H1 (cell line): ENCODE measurements at regions of chr1 and their contacts with region 1.

Region 1: GRCh38 chr1:220786337-220787068 is at the start of gene MTARC1:
- DNase-seq: peak in 1 of 2 experiments; percentile 81
- H3K4me3 ChIP-seq: peak within 1 kb of the TSS; percentile 59 to 84 (median 69)
- H3K27ac ChIP-seq: peak within 1 kb of the TSS; percentile 63; the same call in 1 of the 2 replicates
- H3K4me1 ChIP-seq: peaks cover 4 to 14% (median 11%) of the 10 kb centered on the region in 4 experiments
- H3K27me3 ChIP-seq: no peaks in the 10 kb centered on the region
- CTCF ChIP-seq: peak in 2 of 3 experiments; percentile 12 to 27; a peak in 2 of 4 replicates
- EP300 ChIP-seq: no peak
- POLR2A ChIP-seq: peak in 1 of 2 experiments; percentile 59; a peak in 2 of 3 replicates
- RAD21 ChIP-seq: peak; percentile 5 to 7; a peak in 1 of 4 replicates
- total RNA-seq, gene MTARC1: 42.4 and 46.2 TPM in 2 replicates

Region 2: GRCh38 chr1:220748089-220748934 is 38.2 kb before region 1 on chr1 and contains the start of gene MTARC2:
- CTCF ChIA-PET with region 1: interaction called, 42 read pairs
- POLR2A ChIA-PET with region 1: interaction called, 70 read pairs
- DNase-seq: peak; percentile 57 to 81
- H3K4me3 ChIP-seq: peak within 1 kb of the TSS; percentile 71 to 76 (median 74)
- H3K27ac ChIP-seq: peak within 1 kb of the TSS; percentile 44; the same call in 1 of the 2 replicates
- H3K4me1 ChIP-seq: peaks cover 3 to 9% (median 7%) of the 10 kb centered on the region in 4 experiments; a peak in 5 of 7 replicates
- H3K27me3 ChIP-seq: peaks cover 0 to 28% (median 15%) of the 10 kb centered on the region in 4 experiments; a peak in 6 of 7 replicates
- CTCF ChIP-seq: no peak
- EP300 ChIP-seq: no peak
- POLR2A ChIP-seq: peak; percentile 79 to 92
- RAD21 ChIP-seq: no peak
- total RNA-seq, gene MTARC2: 6.9 and 7.2 TPM in 2 replicates

Region 3: DNA sequence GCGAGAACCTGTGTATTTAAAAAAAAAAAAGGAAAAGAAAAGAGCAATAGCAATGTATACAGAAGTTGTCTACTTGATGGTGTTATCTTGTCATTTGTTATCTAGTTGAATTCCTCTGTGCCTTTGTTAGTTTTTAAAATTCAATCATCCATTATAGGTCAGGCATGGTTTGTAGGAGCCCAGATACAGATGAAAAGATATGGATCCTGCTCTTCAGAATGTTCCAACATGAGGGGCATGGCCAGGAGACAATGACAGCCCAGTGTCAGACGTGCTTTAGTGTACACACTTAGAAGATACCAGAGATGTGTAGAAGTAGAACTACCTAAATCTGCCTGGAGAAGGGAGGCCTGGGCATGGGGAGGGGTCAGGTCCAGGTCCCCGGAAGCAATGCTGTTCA is 21.7 kb before region 1 on chr1:
- CTCF ChIA-PET with region 1: no interaction called
- POLR2A ChIA-PET with region 1: no interaction called
- DNase-seq: no peak
- H3K4me3 ChIP-seq: no peak overlapping the region
- H3K27ac ChIP-seq: no peak overlapping the region
- H3K4me1 ChIP-seq: no peaks in the 10 kb centered on the region
- H3K27me3 ChIP-seq: no peaks in the 10 kb centered on the region
- CTCF ChIP-seq: no peak
- EP300 ChIP-seq: no peak
- POLR2A ChIP-seq: no peak
- RAD21 ChIP-seq: no peak

Region 4: DNA sequence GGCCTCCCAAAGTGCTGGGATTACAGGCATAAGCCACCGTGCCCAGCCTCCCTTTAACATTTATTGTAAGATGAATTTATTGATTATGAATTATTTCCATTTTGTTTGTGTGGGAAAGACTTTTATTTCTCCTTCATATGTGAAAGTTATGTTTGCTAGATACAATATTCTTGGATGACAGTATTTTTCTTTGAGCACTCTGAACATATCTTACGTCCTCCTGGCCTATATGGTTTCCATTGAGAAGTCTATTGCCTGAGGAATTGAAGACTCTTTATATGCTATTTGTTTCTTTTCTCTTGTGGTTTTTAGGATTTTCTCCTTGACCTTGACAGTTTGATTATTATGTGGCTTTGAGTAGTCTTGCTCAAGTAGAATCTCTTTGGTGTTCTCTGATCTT is 65.9 kb after region 1 on chr1:
- CTCF ChIA-PET with region 1: no interaction called
- POLR2A ChIA-PET with region 1: no interaction called
- DNase-seq: no peak
- H3K4me3 ChIP-seq: no peak overlapping the region
- H3K27ac ChIP-seq: no peak overlapping the region
- H3K4me1 ChIP-seq: no peaks in the 10 kb centered on the region
- H3K27me3 ChIP-seq: no peaks in the 10 kb centered on the region
- CTCF ChIP-seq: no peak
- EP300 ChIP-seq: no peak
- POLR2A ChIP-seq: no peak
- RAD21 ChIP-seq: no peak

Region 5: DNA sequence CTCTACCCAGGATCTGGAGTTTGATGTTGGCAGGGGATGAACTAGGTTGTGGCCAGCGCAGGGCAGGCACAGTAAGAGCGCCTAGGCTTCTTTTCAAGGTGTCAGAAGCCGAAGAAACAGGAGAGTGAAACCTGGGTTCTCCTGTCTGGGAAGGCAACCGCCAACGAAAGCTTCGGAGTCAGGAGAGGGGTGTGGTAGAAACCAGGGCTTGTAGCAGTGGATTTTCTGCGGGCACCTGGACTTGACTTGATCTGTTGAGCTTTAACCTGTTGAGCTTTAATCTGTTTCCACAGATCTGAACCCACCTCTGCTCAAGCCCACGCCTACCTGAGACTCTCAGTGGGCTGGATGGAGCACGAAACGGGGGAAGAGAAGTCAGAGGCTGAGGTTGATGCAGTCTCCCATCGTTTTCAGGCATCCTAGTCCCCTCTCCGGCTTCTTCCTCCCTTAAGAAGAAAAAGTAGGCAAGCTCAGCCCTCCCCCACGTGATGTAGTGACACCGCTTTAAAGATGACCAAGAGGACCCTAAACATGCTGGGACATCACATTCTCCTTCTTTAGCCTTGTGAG is 102.0 kb after region 1 on chr1:
- CTCF ChIA-PET with region 1: no interaction called
- POLR2A ChIA-PET with region 1: no interaction called
- DNase-seq: no peak
- H3K4me3 ChIP-seq: peak overlapping the region in 1 of 4 experiments; percentile 16; a peak in 1 of 8 replicates
- H3K27ac ChIP-seq: no peak overlapping the region
- H3K4me1 ChIP-seq: peaks cover 4 to 45% (median 22%) of the 10 kb centered on the region in 4 experiments
- H3K27me3 ChIP-seq: peaks cover 100% of the 10 kb centered on the region in 4 experiments
- CTCF ChIP-seq: no peak
- EP300 ChIP-seq: no peak
- POLR2A ChIP-seq: no peak
- RAD21 ChIP-seq: no peak